Ovary (tissue), 10 donors: ENCODE measurements at regions of chr12 and their contacts with region 1.

Region 1: DNA sequence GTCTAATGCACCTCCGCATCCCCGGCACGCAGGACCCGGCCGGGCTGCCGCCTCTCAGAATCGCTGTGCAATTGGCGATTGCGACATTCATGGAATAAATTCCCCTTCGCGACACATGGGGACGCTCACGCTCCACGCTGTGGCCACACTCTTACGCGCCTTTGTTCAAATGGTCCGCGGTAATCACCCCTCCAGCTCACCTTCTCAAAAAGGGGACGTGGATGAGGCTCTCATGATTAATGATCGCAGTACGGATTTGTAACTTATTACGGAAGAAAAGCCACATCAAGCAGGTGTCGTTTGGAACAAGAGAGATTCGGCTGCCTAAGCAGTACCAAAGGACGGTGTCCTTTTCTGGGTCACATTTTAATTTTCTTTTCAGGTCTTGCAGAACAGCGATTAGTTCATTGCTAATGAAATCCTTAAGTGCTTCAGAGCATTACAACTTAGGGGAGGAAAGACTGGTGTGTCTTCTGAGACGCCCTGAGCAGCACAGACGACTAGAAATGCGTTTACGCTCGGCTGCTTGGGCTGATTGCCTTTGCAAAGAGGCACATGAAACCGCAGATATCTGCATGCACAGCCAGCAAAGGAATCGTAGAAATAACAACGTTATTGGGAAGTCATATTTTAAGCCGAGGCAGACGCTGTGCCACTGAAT is 37.3 kb upstream of the ADGRD1 start:
- DNase-seq: peak; percentile 64 to 83 (median 75)
- H3K4me3 ChIP-seq: peak overlapping the region; percentile 1
- H3K27ac ChIP-seq: no peak overlapping the region
- H3K4me1 ChIP-seq: no peaks in the 10 kb centered on the region
- H3K27me3 ChIP-seq: no peaks in the 10 kb centered on the region
- CTCF ChIP-seq: peak; percentile 96 to 98 (median 97)
- EP300 ChIP-seq: no peak
- POLR2A ChIP-seq: no peak

Region 2: DNA sequence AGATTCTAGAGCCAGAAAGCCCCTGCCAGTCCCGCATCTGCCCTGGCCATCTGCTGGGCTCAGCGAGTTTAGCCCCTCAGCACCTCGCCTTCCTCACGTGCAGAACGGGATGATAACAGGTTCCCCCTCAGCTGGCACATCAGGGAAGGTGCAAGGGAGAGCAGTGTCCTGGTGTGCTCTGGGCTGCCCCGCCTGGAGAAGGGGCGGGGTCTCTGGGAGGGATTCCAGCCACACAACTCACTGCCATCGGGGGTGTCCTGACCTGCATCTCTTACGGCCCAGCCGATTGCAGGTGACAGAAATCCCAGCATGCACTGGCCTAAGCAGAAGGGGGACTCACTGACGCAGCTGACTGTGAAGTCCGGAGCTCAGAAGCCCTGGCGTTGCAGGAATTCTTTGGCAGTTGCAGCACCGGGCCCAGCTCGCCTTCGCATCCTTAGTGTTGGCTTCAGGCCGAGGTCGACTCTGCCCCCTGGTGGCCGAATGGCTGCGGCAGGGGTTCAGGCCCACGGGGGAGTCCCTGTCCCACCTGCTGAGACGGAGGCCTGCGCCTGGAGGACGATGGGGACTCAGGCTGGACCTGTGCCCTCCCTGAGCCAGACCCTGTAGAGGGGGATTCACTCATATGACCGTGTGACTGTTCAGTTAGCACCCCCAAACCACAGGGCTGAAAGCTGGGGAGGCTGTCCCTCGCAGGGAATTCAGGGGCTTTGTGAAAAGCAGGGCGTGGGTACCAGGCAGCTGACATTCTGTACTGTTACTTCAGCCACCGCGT is 215.9 kb after region 1 on chr12:
- intact Hi-C with region 1: loop called in 3 of 4 experiments (anchors 5 to 10 kb)
- DNase-seq: peak; percentile 79 to 91 (median 84)
- H3K4me3 ChIP-seq: no peak overlapping the region
- H3K27ac ChIP-seq: peak overlapping the region; percentile 45 to 60
- H3K4me1 ChIP-seq: peaks cover 1% of the 10 kb centered on the region
- H3K27me3 ChIP-seq: no peaks in the 10 kb centered on the region
- CTCF ChIP-seq: peak; percentile 67 to 83 (median 70)
- EP300 ChIP-seq: no peak
- POLR2A ChIP-seq: no peak